Mammary epithelial cell (primary cell): ENCODE measurements at regions of chr1 and their contacts with region 1.

Region 1: DNA sequence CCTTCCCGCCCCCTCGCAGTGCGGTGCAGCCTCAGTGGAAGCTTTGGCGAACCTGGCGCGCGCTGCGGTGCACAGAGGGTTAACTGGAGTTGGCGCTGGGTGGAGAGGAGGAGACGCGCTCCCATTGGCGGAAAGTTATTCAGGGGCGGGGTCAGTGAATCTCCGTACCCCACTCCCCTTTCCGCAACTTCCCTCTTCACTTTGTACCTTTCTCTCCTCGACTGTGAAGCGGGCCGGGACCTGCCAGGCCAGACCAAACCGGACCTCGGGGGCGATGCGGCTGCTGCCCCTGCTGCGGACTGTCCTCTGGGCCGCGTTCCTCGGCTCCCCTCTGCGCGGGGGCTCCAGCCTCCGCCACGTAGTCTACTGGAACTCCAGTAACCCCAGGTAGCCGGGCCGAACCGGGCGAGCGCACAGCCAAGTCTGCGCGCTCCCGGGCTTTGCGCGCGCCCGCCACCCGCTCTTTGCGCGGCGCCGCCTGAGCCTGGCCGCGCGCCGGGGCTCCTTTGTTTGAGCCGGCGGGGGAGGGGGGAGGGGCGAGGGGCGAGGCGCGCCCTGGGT is at the start of gene EFNA4:
- DNase-seq: peak; percentile 88
- H3K4me3 ChIP-seq: peak within 1 kb of the TSS; percentile 63 to 88 (median 78)
- H3K27ac ChIP-seq: peak within 1 kb of the TSS; percentile 37
- H3K4me1 ChIP-seq: peaks cover 23% of the 10 kb centered on the region
- H3K27me3 ChIP-seq: no peaks in the 10 kb centered on the region
- CTCF ChIP-seq: no peak
- total RNA-seq, gene EFNA4: 5.0 to 5.8 TPM

Region 2: DNA sequence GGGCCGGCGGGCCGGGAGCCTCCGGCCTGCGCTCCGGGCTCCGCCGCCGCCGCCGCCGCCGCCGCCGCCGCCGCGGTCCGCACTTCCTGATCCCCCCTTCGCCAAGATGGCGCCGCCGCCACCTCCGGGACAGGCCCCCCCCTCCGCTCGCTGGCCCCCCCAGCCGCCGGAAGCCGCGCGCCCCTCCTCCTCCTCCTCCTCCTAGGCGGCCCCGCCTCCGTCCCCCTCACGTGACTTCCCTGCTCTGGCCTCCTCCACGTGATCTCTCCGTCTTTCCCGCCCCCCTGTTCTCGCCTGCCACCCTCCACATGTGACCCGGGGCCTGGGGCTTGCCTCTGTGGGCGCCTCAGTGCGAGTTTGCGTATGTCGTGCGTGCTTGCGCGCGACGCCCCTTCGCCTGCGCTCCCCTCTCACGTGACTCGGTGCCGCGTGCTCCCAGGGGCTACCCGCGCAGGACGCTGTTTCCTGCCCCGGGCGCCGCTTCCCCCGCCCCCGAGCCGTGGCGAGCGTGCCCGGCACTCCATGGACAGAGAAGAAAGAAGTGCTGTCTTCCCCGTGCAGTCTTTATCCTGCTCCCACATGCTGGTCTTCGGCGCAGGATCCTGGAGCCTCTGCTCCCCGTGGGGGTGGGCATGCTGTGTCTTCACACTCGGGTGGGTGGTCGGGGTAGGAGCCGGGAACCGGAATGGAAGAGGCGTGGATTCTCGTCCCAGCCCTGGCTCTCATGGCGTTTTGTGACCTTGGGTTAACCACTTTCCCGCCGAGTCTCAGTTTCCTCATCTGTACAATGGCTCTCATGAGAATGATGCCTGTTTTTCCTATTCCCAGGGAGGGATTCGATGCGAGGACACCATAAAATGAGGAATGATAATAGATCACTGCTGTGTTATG is 504.8 kb before region 1 on chr1 and contains the start of gene UBE2Q1:
- CTCF ChIA-PET with region 1: no interaction called
- dilution Hi-C with region 1: no loop called
- in situ Hi-C with region 1: loop called in 1 of 2 experiments (anchors 10 kb)
- intact Hi-C with region 1: no loop called
- DNase-seq: peak; percentile 97
- H3K4me3 ChIP-seq: peak within 1 kb of the TSS; percentile 54 to 74 (median 68)
- H3K27ac ChIP-seq: peak within 1 kb of the TSS; percentile 70
- H3K4me1 ChIP-seq: peaks cover 18% of the 10 kb centered on the region
- H3K27me3 ChIP-seq: no peaks in the 10 kb centered on the region
- CTCF ChIP-seq: no peak
- total RNA-seq, gene UBE2Q1: 31.2 to 80.1 TPM

Region 3: DNA sequence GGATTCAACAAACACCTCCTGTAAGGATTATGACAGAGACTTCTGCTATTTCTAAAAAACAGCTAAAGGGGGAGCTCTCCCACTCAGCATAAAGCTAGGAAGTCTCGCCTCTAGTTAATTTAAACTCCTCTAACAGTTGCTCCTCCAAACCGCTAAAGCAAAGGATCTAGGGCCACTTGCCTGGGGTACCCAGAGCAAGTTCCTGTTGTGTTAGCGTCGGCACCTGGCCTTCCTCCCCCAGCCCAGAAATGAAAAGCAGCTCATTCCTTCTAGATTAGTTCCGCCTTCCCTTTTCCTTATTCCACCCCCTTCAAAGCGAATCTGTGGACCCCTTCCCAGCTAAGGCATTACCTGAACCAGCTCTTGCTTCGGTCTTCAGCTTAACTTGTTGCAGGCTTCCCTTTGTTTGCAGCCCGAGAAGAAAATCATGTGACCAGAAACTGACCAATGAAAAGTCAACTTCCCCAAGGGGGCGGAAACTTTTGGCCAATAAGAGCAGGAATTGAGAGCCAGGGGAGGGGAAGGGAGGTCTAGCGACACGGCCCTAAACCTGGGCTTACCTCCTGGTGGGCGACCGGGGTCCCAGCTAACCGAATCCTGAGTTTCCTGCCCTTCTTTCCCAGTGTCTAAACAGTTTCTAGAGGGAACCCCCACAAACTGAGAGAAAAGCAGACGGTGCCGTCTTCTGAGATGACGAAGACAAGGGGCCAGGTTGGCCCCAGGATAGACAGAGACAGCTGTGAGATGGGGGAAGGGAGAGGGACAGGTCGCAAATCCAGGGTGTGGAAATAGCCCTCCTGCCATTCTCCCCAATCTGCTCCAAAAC is 107.7 kb before region 1 on chr1 and contains the start of gene PBXIP1:
- CTCF ChIA-PET with region 1: interaction called, 5 read pairs
- dilution Hi-C with region 1: loop called (anchors 5 kb)
- in situ Hi-C with region 1: no loop called
- intact Hi-C with region 1: loop called (anchors 1 kb)
- DNase-seq: peak; percentile 85
- H3K4me3 ChIP-seq: peak within 1 kb of the TSS; percentile 56 to 65 (median 59)
- H3K27ac ChIP-seq: peak within 1 kb of the TSS; percentile 69
- H3K4me1 ChIP-seq: peaks cover 20% of the 10 kb centered on the region
- H3K27me3 ChIP-seq: no peaks in the 10 kb centered on the region
- CTCF ChIP-seq: peak in 1 of 2 donors; percentile 41
- total RNA-seq, gene PBXIP1: 17.7 to 52.0 TPM

Region 4: DNA sequence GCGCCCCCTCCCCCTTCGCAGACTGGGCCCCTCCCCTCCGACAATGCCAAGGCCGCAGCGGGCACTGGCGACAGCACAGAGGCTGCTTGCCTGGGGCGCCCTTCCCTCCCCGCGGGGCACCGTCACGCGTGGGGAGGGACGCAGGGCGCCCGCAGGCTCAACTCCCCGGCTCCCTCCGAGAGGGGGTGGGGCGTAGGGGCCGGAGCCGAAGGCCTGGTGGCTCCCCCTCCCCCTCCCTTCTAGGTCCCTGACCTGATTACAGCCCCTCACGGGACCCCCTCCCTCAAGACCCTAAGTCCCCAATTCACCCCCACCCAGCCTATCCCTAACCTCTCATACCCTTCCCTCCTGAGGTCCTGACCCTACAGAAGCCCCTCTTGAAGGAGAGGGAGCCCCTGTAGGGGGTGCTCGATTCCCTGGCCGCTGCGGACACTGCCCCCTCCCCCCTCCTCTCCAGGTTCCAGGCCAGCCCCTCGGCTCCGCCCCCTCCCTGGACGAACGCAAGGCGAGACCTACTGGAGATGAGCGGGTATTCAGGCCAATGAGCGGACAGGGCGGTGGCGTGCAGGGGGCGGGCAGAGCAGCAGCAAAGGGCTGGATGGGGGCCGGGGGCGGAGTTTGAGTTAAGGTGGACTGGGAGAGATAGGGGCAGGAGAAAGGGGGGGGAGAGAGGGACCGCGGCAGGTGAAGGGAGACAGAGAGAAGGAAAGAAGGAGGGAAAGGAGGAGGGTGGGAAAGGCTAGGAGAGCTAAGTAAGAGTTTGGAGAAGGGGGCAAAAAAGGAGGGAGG is 61.8 kb before region 1 on chr1:
- CTCF ChIA-PET with region 1: no interaction called
- dilution Hi-C with region 1: no loop called
- in situ Hi-C with region 1: no loop called
- intact Hi-C with region 1: loop called (anchors 1 kb)
- DNase-seq: peak; percentile 99
- H3K4me3 ChIP-seq: peak overlapping the region; percentile 52 to 85 (median 62)
- H3K27ac ChIP-seq: peak overlapping the region; percentile 70
- H3K4me1 ChIP-seq: peaks cover 35% of the 10 kb centered on the region
- H3K27me3 ChIP-seq: no peaks in the 10 kb centered on the region
- CTCF ChIP-seq: peak in 1 of 2 donors; percentile 60

Region 5: DNA sequence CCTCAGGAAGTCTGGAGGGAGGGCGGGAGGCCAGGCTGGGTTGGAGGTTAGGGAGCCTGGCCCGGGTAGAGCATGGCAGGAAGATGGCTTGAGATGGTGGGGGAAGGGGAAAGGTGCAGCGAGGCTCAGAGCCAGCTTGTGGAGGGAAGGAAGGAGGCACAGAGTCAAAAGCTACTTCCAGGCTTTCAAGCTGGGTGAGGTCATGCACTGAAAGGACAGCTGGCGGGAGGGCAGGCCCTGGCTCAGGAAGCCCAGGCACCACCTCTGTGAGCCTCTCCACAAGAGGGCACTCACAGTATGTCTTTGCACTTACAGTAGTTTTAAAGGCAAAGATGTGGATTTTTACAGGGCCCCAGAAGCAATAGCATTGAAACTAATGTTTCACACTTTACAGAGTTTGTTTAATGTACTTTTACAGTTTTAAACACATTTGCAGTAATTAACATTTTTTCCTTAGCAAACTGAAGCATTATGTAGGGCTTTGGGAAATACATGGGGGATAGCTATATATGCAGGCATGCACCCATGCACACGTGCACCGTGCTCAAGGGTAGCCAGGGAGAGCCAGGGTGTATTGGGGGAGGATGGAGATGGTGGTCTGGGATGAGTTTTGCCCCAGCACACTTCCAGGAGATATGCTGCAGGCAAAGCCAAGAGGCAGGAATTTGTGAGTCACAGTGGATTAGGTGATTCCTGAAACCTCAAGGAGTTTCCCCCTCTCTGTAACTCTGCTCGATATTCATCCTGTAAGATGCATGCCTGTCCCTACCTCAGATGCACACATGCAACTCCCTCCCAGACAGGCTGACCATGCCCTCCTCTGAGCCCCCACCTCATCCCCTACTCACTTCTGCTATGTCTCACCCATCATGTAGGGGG is 18.6 kb before region 1 on chr1:
- CTCF ChIA-PET with region 1: no interaction called
- dilution Hi-C with region 1: no loop called
- in situ Hi-C with region 1: no loop called
- intact Hi-C with region 1: loop called (anchors 1 kb)
- DNase-seq: peak; percentile 55
- H3K4me3 ChIP-seq: no peak overlapping the region
- H3K27ac ChIP-seq: no peak overlapping the region
- H3K4me1 ChIP-seq: peaks cover 20% of the 10 kb centered on the region
- H3K27me3 ChIP-seq: no peaks in the 10 kb centered on the region
- CTCF ChIP-seq: peak; percentile 76 to 84

Region 6: GRCh38 chr1:155135415-155136028 is 71.9 kb after region 1 on chr1 and contains the start of gene SLC50A1:
- CTCF ChIA-PET with region 1: no interaction called
- dilution Hi-C with region 1: loop called (anchors 5 kb)
- in situ Hi-C with region 1: no loop called
- intact Hi-C with region 1: no loop called
- DNase-seq: peak; percentile 91
- H3K4me3 ChIP-seq: peak within 1 kb of the TSS; percentile 64 to 80 (median 70)
- H3K27ac ChIP-seq: peak within 1 kb of the TSS; percentile 98
- H3K4me1 ChIP-seq: peaks cover 44% of the 10 kb centered on the region
- H3K27me3 ChIP-seq: no peaks in the 10 kb centered on the region
- CTCF ChIP-seq: peak in 1 of 2 donors; percentile 24
- total RNA-seq, gene SLC50A1: 31.3 to 40.2 TPM